SK-N-SH (cell line): ENCODE measurements at regions of chr1 and their contacts with region 1.

Region 1: DNA sequence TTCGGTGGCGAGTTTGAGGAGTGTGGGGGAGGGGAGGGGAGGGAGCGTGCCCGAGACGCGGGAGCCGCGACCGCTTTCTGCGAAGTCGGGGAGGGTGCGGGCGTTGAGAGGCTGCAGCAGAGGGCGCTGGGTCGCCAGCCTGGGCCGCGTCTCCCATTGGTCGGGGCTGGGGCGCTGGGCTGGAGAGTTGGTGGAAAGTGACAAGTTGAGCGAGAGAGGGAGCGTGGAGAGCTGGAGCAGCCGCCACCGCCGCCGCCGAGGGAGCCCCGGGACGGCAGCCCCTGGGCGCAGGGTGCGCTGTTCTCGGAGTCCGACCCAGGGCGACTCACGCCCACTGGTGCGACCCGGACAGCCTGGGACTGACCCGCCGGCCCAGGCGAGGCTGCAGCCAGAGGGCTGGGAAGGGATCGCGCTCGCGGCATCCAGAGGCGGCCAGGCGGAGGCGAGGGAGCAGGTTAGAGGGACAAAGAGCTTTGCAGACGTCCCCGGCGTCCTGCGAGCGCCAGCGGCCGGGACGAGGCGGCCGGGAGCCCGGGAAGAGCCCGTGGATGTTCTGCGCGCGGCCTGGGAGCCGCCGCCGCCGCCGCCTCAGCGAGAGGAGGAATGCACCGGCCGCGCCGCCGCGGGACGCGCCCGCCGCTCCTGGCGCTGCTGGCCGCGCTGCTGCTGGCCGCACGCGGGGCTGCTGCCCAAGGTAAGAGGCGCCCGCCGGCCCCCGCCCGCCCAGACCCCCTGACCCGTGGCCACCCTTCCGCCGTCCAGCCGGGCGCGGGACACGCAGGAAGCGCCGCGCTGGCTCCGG is at the start of gene ROR1:
- DNase-seq: peak; percentile 95
- H3K4me3 ChIP-seq: peak within 1 kb of the TSS; percentile 84 to 91
- H3K27ac ChIP-seq: peak within 1 kb of the TSS; percentile 15 to 85; a peak in 3 of 4 replicates
- H3K4me1 ChIP-seq: peaks cover 0 to 11% of the 10 kb centered on the region in 2 experiments; a peak in 3 of 4 replicates
- H3K27me3 ChIP-seq: no peaks in the 10 kb centered on the region
- CTCF ChIP-seq: peak; percentile 69
- EP300 ChIP-seq: no peak
- RAD21 ChIP-seq: peak; percentile 84
- polyA plus RNA-seq, gene ROR1: 4.0 and 5.5 TPM in 2 replicates

Region 2: DNA sequence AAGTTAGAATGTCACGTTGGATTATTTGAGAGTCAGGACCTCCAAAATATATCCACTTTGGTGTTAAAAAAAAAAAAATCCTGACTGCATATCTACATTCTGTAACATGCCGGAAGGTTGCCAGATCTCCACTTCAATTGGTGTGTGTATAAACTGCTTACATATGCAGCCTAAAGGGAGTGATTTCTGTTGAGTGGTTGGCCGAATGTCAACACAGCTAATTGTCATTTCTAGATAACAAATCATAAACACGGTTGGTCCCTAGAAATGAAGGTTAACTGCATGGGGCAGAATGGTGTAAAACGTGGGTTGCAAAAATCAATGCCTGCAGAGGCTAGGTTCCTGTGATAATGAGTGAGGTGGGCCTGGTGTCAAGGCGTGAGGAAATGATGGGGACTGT is 15.2 kb before region 1 on chr1:
- CTCF ChIA-PET with region 1: interaction called, 22 read pairs
- POLR2A ChIA-PET with region 1: no interaction called
- DNase-seq: peak; percentile 27
- H3K4me3 ChIP-seq: no peak overlapping the region
- H3K27ac ChIP-seq: peak overlapping the region in 1 of 2 experiments; percentile 72; a peak in 2 of 4 replicates
- H3K4me1 ChIP-seq: peaks cover 0 to 13% of the 10 kb centered on the region in 2 experiments; a peak in 2 of 4 replicates
- H3K27me3 ChIP-seq: no peaks in the 10 kb centered on the region
- CTCF ChIP-seq: no peak
- EP300 ChIP-seq: 0 out of 4 replicates have a peak, but pooled peaks of 1 of the 2 experiments have one; percentile 17
- RAD21 ChIP-seq: no peak

Region 3: DNA sequence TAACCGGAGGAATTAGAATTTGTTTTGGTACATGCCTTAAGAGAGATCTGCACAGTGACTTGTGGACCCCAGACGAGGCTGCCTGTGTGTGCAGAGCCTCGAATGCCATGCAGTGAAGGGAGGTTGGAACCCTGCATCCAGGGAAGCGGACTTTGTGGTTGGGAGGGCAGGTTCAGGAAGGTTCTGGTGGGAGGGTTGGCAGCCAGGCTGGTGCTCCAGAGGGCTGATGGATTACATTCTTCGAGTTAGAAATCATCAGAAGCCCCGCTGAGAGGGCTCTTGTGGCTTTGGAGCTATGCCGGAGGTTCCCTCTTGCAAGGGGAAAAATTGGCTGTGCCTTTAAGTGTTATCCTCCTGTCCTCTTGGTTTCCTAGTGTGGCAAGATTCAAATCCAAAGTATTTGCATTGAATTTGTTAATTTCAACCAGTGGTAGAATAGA is 20.9 kb after region 1 on chr1:
- CTCF ChIA-PET with region 1: interaction called, 12 read pairs
- POLR2A ChIA-PET with region 1: no interaction called
- DNase-seq: no peak
- H3K4me3 ChIP-seq: no peak overlapping the region
- H3K27ac ChIP-seq: no peak overlapping the region
- H3K4me1 ChIP-seq: peaks cover 0 to 19% of the 10 kb centered on the region in 2 experiments; a peak in 2 of 4 replicates
- H3K27me3 ChIP-seq: no peaks in the 10 kb centered on the region
- CTCF ChIP-seq: no peak
- EP300 ChIP-seq: no peak
- RAD21 ChIP-seq: no peak

Region 4: GRCh38 chr1:63915121-63915520 is 141.1 kb after region 1 on chr1:
- CTCF ChIA-PET with region 1: interaction called, 18 read pairs
- POLR2A ChIA-PET with region 1: no interaction called
- DNase-seq: peak; percentile 32
- H3K4me3 ChIP-seq: no peak overlapping the region
- H3K27ac ChIP-seq: no peak overlapping the region
- H3K4me1 ChIP-seq: peaks cover 0 to 27% of the 10 kb centered on the region in 2 experiments; a peak in 3 of 4 replicates
- H3K27me3 ChIP-seq: no peaks in the 10 kb centered on the region
- CTCF ChIP-seq: peak; percentile 46
- EP300 ChIP-seq: no peak
- RAD21 ChIP-seq: peak; percentile 67

Region 5: GRCh38 chr1:64112281-64112680 is 338.3 kb after region 1 on chr1:
- CTCF ChIA-PET with region 1: interaction called, 10 read pairs
- POLR2A ChIA-PET with region 1: no interaction called
- DNase-seq: no peak
- H3K4me3 ChIP-seq: no peak overlapping the region
- H3K27ac ChIP-seq: peak overlapping the region; percentile 73 to 96
- H3K4me1 ChIP-seq: peaks cover 25% of the 10 kb centered on the region in 2 experiments
- H3K27me3 ChIP-seq: no peaks in the 10 kb centered on the region
- CTCF ChIP-seq: no peak
- EP300 ChIP-seq: no peak
- RAD21 ChIP-seq: no peak

Region 6: DNA sequence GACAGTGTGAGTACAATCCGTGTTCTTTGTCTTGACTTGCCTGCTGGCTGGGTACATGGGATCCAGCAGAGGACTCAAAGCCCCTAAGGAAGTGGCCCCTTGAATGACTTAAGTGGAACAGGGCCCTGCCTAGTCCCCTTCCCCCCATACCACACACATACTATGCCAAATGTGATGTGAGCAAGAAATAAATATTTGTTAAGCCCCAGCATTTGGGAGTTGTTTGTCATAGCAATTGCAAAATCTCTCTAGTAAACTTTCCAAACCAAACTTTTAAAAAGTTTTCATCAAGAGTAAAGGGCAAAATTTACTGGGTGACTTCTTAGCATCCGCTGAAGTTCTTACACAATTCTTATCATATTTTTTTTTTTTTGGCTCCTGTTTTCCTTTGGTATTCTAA is 663.4 kb after region 1 on chr1:
- CTCF ChIA-PET with region 1: no interaction called
- POLR2A ChIA-PET with region 1: no interaction called
- DNase-seq: no peak
- H3K4me3 ChIP-seq: no peak overlapping the region
- H3K27ac ChIP-seq: no peak overlapping the region
- H3K4me1 ChIP-seq: no peaks in the 10 kb centered on the region; a peak in 1 of 4 replicates
- H3K27me3 ChIP-seq: no peaks in the 10 kb centered on the region
- CTCF ChIP-seq: no peak
- EP300 ChIP-seq: no peak
- RAD21 ChIP-seq: no peak